Left colon (tissue), 2 donors: ENCODE measurements at regions of chr1 and their contacts with region 1.

Region 1: GRCh38 chr1:155989242-155990004 is 11.1 kb upstream of the ARHGEF2 start:
- DNase-seq: peak; percentile 57 to 67
- ATAC-seq: peak; percentile 92

Region 2: GRCh38 chr1:155934097-155934935 is 55.1 kb before region 1 on chr1 and contains the start of gene KHDC4:
- intact Hi-C with region 1: loop called (anchors 5 to 10 kb)
- DNase-seq: peak; percentile 96 to 97
- ATAC-seq: peak; percentile 82
- total RNA-seq, gene KHDC4: 45.6 to 54.1 TPM